Activated CD8-positive, alpha-beta T cell treated with anti-CD3 and anti-CD28 coated beads for 36 hours (primary cell): ENCODE measurements at regions of chr2 and their contacts with region 1.

Region 1: DNA sequence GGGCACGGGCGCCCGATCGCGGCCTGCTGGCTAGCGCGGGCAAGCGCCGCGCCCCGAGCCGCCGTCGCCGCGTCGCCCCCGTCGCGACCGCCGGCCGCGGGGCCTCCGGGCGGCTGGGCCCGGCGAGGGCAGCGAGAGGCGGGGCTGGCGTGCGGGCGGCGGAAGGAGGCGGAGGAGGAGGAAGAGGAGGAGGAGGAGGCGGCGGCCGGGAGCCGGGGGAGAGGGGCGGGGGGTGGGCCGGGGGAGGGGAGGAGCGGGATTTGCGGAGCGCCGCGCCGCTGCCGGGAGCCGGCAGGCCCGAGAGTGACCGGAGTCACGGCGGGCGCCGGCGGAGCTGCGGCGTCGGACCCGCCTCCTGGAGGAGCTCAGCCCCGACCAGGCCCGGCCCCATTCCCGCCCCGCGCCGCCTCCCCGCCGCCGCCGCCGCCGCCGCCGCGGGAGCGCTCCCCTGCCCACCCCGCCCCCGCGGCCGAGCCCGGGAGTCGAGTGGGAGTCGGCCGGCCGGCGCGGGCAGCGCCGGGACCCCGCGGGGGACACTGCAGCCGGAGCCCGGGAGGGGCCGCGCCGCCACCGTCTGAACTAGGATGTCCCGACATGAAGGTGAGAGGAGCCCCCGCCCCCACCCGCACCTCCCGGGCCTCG is at the start of gene KCMF1:
- DNase-seq: peak; percentile 70
- ATAC-seq: peak; percentile 67
- H3K4me3 Mint-ChIP-seq: peak within 1 kb of the TSS; percentile 99
- H3K27ac Mint-ChIP-seq: peak within 1 kb of the TSS; percentile 100
- H3K4me1 Mint-ChIP-seq: peaks cover 36% of the 10 kb centered on the region
- H3K27me3 Mint-ChIP-seq: no peaks in the 10 kb centered on the region
- CTCF ChIP-seq: no peak
- total RNA-seq, gene KCMF1: 101 to 105 TPM

Region 2: DNA sequence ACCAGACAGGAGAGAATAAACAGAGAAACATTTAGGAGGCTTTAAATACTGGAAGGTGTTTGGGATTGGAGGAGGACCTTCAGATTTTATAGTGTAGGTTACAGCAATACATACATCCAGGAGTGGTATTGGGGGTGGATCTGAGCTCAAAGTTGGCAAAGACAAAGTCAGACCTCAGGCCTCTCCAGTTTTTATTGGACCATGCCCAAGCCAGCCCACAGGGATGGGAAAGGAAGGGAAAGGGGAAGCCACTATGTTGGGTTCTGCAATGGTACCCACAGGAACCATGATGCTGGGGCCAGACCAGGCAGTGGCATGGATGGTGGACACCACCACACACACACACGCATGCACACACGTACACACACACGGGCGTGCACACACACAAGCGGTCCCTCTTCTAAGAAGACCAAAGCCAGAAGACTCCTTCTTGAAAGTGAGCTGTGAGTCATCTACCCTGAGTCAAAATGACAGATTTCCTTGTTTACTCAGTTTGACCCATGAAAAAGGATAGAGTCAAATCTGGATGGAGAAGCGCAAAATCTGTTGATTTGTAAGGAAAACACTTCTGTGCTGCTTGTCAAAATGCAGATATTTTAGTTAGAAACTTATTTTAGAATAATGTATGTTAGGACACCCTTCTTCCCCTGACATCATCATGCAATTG is 178.0 kb before region 1 on chr2:
- CTCF ChIA-PET with region 1: no interaction called
- POLR2A ChIA-PET with region 1: no interaction called
- intact Hi-C with region 1: no loop called
- DNase-seq: no peak
- ATAC-seq: no peak
- H3K4me3 Mint-ChIP-seq: no peak overlapping the region
- H3K27ac Mint-ChIP-seq: no peak overlapping the region
- H3K4me1 Mint-ChIP-seq: peaks cover 9% of the 10 kb centered on the region
- H3K27me3 Mint-ChIP-seq: no peaks in the 10 kb centered on the region
- CTCF ChIP-seq: no peak

Region 3: GRCh38 chr2:84939426-84940087 is 31.4 kb before region 1 on chr2:
- CTCF ChIA-PET with region 1: interaction called, 3 read pairs
- POLR2A ChIA-PET with region 1: interaction called, 45 read pairs
- intact Hi-C with region 1: loop called (anchors 5 kb)
- DNase-seq: peak; percentile 92
- ATAC-seq: peak; percentile 84
- H3K4me3 Mint-ChIP-seq: peak overlapping the region; percentile 63
- H3K27ac Mint-ChIP-seq: peak overlapping the region; percentile 94
- H3K4me1 Mint-ChIP-seq: peaks cover 67% of the 10 kb centered on the region
- H3K27me3 Mint-ChIP-seq: no peaks in the 10 kb centered on the region
- CTCF ChIP-seq: no peak

Region 4: DNA sequence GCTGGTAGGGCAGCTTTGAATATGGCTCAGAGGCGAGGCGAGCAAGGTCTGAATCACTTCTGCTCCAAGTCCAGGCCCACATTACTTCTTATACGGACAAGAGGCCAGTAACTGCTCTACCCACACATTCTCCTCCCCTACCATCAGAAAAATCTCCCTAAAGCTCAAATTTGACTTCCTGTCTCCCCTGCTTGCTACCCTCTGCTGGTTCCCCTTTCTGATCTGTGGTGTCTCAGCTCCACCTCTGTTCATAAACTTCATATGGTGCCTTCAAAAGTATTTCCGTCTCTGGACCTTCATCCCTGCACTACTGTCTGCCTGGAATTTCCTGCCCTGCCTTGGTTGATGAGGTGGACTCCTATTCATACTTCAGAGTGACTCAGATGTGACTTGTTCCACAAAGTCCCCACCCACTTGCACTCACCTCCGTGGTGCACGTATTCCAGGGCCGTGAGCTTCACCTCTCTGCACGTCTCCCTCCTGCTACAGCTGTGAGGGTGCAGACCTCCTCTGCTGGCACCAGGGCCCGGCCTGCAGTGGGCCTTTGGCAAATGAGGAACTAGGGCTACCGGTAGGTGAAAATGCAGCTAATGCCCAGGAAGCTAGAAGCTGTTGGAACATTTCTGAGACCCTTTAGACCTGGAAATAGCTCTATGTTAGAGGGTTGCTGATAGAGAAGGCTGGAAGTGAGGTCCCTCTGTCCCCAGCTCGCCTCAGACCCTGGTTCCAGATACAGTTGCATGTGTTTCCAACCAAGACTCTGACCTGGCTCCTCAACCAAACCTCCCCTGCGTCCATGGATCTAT is 24.6 kb before region 1 on chr2:
- CTCF ChIA-PET with region 1: interaction called, 7 read pairs
- POLR2A ChIA-PET with region 1: interaction called, 45 read pairs
- intact Hi-C with region 1: no loop called
- DNase-seq: peak; percentile 92
- ATAC-seq: peak; percentile 85
- H3K4me3 Mint-ChIP-seq: peak overlapping the region; percentile 68
- H3K27ac Mint-ChIP-seq: peak overlapping the region; percentile 95
- H3K4me1 Mint-ChIP-seq: peaks cover 47% of the 10 kb centered on the region
- H3K27me3 Mint-ChIP-seq: no peaks in the 10 kb centered on the region
- CTCF ChIP-seq: no peak

Region 5: DNA sequence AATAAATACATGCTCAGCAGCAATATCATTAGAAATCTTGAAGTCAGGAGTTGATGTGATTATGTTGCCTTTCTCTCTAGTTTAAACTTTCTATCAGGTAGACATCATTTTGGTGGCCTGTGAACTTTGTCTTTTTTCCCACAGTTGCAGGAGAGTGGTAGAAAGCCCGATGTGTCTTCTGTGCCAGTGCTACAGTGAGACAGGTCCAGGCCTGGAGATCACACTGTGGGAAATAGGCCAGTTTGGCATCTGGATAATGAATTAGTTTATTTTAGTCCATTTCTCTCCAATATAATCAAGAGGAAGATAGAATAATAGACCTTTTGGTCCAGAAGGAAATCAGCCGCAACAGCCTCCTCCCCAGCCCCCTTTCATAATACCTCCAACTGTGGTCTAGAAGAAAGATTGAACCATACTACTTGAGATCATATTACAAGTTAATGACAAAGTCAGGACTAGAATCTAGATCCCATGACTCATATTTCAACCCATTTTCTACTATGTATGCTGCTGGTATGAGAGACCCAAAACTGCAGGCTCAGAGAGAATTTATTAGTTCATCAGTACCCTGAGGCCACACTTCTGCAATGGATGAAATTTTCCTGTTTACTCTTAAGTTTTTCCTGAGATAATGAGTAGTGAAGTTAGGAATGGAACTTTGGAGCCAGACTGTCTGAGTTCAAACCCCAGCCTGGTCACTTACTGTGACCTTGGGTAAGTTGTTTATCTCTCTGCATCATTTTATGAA is 20.6 kb after region 1 on chr2:
- CTCF ChIA-PET with region 1: interaction called, 11 read pairs
- POLR2A ChIA-PET with region 1: interaction called, 10 read pairs
- intact Hi-C with region 1: no loop called
- DNase-seq: no peak
- ATAC-seq: peak; percentile 43
- H3K4me3 Mint-ChIP-seq: no peak overlapping the region
- H3K27ac Mint-ChIP-seq: no peak overlapping the region
- H3K4me1 Mint-ChIP-seq: peaks cover 33% of the 10 kb centered on the region
- H3K27me3 Mint-ChIP-seq: no peaks in the 10 kb centered on the region
- CTCF ChIP-seq: no peak

Region 6: GRCh38 chr2:85001595-85001994 is 30.6 kb after region 1 on chr2:
- CTCF ChIA-PET with region 1: interaction called, 11 read pairs
- POLR2A ChIA-PET with region 1: interaction called, 16 read pairs
- intact Hi-C with region 1: no loop called
- DNase-seq: no peak
- ATAC-seq: peak; percentile 32
- H3K4me3 Mint-ChIP-seq: no peak overlapping the region
- H3K27ac Mint-ChIP-seq: peak overlapping the region; percentile 74
- H3K4me1 Mint-ChIP-seq: peaks cover 61% of the 10 kb centered on the region
- H3K27me3 Mint-ChIP-seq: no peaks in the 10 kb centered on the region
- CTCF ChIP-seq: no peak

Region 7: GRCh38 chr2:85011747-85012146 is 40.8 kb after region 1 on chr2:
- CTCF ChIA-PET with region 1: interaction called, 21 read pairs
- POLR2A ChIA-PET with region 1: interaction called, 4 read pairs
- intact Hi-C with region 1: loop called (anchors 5 kb)
- DNase-seq: no peak
- ATAC-seq: no peak
- H3K4me3 Mint-ChIP-seq: no peak overlapping the region
- H3K27ac Mint-ChIP-seq: peak overlapping the region; percentile 80
- H3K4me1 Mint-ChIP-seq: peaks cover 85% of the 10 kb centered on the region
- H3K27me3 Mint-ChIP-seq: no peaks in the 10 kb centered on the region
- CTCF ChIP-seq: no peak

Region 8: DNA sequence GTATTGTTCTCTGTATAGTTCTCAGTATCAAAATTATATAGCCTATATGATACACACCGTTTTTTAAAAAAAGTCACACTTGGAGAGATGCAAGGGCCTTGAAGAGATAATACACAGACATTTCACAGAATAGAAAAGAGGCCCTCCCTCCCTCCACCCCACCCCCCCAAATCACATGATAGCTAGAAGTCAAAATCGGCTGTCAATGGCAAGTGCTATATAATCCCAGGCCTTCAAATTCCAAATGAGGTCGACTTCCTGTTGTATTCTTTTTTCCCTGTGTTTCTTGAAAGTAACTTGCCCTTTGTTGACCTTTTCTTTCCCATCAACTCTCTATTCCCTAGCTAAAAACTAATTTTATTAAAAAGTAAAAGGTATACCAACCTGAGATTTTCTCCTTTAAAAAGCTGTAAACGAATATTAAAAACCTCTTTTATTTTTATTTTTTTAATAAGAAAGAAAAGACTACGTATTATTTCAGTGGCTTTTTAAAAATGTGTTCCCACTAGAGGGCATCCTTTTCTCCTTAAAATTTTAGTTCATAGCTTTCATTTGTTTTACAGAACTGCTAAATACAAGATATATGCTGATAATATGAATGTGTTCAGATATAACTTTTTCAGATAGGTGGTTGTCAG is 46.5 kb after region 1 on chr2:
- CTCF ChIA-PET with region 1: interaction called, 21 read pairs
- POLR2A ChIA-PET with region 1: interaction called, 4 read pairs
- intact Hi-C with region 1: loop called (anchors 5 kb)
- DNase-seq: no peak
- ATAC-seq: no peak
- H3K4me3 Mint-ChIP-seq: no peak overlapping the region
- H3K27ac Mint-ChIP-seq: peak overlapping the region; percentile 45
- H3K4me1 Mint-ChIP-seq: peaks cover 61% of the 10 kb centered on the region
- H3K27me3 Mint-ChIP-seq: no peaks in the 10 kb centered on the region
- CTCF ChIP-seq: peak; percentile 50

Region 9: GRCh38 chr2:85066874-85067351 is 95.9 kb after region 1 on chr2:
- CTCF ChIA-PET with region 1: no interaction called
- POLR2A ChIA-PET with region 1: no interaction called
- intact Hi-C with region 1: no loop called
- DNase-seq: peak; percentile 81
- ATAC-seq: peak; percentile 82
- H3K4me3 Mint-ChIP-seq: no peak overlapping the region
- H3K27ac Mint-ChIP-seq: no peak overlapping the region
- H3K4me1 Mint-ChIP-seq: peaks cover 4% of the 10 kb centered on the region
- H3K27me3 Mint-ChIP-seq: peaks cover 15% of the 10 kb centered on the region
- CTCF ChIP-seq: peak; percentile 70